ENCODE measurements at regions of chr11 and their contacts with region 1.

Region 1: GRCh38 chr11:75342903-75343870 is 8.3 kb downstream of the ARRB1 start:
- DNase-seq: no peak
- H3K4me3 Mint-ChIP-seq: no peak overlapping the region
- H3K27ac Mint-ChIP-seq: no peak overlapping the region
- H3K4me1 Mint-ChIP-seq: peaks cover 79% of the 10 kb centered on the region
- H3K27me3 Mint-ChIP-seq: no peaks in the 10 kb centered on the region

Region 2: DNA sequence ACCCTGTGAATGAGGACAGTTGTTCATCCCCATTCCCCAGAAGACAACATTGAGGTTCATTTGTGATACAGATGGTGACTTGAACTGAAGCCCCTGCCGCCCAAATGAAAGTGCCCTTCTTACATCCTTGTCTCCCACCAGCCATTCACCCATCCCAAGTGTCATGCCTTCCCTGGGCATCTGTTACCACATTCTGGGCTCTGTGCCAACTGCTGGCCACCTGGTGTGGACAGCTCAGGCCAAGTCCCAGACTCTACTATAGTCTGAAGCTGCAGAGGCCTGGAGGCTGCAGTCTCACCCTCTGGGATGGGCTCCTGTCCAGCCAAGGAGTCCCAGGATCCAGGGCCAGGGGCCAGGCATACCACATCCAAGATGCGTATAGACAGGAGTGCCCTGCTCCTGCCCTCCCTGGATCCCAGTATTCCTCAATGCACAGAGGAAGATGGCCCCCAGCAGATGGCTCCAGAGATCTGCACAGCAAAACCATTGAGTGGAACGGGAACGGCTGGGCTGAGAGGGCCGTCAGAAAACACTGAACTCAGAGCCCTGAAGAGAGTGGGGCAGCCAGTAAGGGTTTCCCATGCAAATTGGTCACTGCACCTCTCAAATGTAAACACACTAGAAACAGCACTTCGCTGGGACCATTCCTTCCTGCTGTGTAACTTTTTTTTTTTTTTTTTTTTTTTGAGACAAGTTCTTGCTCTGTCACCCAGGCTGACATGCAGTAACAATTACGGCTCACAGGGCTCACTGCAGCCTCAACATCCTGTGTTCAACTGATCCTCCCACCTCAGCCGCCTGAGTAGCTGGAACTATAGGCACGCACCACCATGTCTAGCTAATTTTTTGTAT is 14.5 kb before region 1 on chr11:
- CTCF ChIA-PET with region 1: interaction called, 29 read pairs
- DNase-seq: peak; percentile 81
- H3K4me3 Mint-ChIP-seq: no peak overlapping the region
- H3K27ac Mint-ChIP-seq: peak overlapping the region; percentile 91
- H3K4me1 Mint-ChIP-seq: peaks cover 70% of the 10 kb centered on the region
- H3K27me3 Mint-ChIP-seq: no peaks in the 10 kb centered on the region

Region 3: DNA sequence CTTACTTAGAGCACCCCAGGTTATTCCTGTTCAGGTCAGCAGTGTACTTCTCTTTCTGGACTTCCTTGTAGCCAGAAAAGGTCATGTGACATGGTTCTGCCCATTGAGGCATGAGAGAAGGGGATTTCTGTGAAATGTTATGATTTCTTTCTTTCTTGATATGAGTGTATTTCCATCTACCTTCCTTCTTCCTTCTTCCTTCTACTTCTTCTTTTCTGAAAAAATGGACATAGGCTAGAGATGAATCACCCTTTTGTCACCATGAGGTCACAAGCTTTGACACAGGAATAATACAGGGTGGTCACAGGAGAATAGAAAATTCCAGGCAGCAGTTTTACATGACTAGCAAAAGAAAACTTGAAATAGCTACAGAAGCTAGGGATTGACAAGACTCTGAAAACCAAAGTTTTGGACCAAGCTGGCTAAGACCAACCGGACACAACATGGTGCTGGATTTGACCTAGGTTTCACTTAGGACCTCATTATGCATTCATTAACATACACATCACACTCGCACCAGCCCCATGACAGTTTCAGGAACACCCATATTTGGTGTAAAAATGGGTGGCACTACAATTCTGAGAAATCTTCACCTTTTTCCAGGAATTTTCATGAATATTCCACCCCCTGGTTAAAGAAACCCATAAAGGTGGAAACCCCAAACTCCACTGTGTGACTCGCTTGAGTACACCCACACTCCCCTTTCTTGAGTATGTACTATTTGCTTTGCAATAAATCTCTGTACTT is 346.8 kb after region 1 on chr11:
- CTCF ChIA-PET with region 1: no interaction called
- DNase-seq: no peak
- H3K4me3 Mint-ChIP-seq: no peak overlapping the region
- H3K27ac Mint-ChIP-seq: no peak overlapping the region
- H3K4me1 Mint-ChIP-seq: peaks cover 3% of the 10 kb centered on the region
- H3K27me3 Mint-ChIP-seq: peaks cover 52% of the 10 kb centered on the region